Posterior cingulate gyrus (tissue), 11 donors: ENCODE measurements at regions of chr15 and their contacts with region 1.

Region 1: DNA sequence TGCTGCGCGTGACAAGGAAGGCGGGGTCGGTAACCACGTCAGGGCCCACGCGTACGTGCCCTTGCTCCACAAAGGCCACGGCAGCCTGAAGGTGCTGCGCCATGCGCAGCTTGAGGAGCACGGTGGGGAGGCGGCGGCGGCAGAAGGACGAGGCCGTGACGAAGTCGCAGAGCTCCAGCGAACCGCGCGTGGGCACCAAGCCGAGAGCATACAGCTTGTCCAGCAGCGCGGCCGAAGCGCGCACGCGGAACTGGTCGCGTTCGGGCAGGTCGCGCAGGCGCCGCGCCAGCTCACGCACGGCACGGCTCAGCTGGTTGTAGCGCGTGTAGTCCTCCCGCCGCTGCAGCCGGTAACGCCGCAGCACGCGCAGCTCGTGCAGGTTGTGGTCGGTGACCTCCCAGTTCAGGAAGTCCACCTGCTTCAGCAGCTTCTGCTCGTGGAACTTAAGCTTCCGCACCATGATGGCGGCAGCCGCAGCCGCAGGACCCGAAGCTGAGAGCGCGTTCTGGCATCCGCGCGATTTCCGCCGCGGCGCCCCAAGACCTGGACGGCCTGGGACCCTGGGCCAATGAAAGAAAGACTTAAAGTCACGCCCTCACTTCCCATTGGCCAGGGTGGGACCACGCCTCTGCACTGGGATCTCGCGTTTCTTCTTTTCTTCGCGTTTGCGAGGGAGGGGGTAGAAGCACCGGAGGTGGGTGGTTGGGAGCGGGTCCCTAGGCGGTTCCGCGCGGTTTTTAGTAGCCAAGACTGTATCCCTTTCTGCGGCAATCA is at the start of gene IMP3:
- DNase-seq: peak; percentile 94 to 99 (median 96)

Region 2: DNA sequence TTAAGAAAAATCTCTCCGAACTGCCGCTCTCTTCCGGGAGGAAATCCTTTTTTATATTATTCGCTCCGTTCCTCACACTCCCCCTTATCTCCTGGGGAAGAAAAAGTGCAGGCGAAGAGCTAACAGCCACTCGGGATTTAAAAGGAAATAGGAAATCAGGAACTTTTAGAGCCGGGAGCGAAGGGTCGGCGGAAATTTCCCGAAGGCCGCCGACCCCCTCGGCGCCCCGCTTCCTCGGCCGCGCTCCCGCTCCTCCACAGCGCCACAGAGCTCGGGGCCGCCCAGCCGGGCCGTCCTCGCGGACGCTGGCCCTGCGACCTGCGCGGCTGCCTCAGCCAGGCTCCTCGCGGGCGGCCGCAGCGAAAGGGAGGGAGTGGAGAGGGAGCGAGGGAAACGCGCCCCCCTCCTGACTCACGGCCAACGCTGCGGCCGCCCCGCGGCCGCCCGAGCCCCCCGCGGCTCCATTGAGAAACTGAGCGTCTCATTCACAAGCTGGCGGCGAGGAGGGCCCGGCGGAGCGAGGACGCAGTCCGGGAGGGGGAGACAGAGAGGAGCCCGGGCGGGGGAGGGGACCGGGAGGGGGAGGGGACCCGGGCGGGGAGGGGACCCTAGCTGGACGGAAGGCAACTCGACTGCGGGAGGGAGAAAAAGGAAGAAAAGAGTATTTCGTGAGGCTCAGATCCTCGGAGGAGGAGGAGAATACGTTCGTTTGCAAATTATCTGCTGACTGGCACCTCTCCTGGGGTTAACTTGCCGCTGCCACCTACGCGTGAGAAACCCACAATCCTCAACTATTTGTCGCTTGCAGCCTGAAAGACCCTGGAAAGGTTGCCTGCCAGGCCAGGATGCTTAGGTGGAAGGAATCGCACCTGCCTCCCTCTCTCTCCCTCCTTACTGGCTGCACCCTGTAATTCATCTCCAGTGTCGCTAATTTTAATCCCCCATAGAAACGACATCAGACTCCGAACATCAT is 60.7 kb before region 1 on chr15 and contains the start of gene PTPN9:
- intact Hi-C with region 1: loop called (anchors 2 kb)
- DNase-seq: peak; percentile 62 to 96 (median 78)

Region 3: GRCh38 chr15:75625542-75626347 is 14.2 kb before region 1 on chr15 and contains the start of gene SNUPN:
- intact Hi-C with region 1: loop called (anchors 1 kb)
- DNase-seq: peak; percentile 87 to 99 (median 91)

Region 4: DNA sequence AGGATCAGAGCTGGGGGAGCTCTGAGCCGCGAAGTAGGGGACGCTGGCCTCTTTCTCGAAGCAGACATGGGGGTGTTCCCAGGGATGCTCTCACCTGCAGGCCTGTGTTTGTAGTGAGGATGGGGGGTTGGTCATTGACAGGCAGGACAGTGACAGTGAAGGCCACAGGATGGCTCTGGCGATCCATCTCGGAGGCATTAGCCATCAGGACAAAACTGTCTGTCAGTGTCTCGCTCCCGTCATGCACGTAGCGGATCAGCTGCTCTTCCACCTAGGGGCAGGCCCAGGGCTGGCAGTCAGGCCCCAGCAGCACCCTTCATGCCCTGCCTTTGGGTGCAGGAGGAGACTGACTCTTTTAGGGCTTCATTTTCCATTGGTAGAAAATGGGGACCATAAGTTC is 44.7 kb after region 1 on chr15:
- intact Hi-C with region 1: loop called (anchors 5 kb)
- DNase-seq: no peak